CD4-positive, alpha-beta T cell (primary cell): ENCODE measurements at regions of chr2 and their contacts with region 1.

Region 1: GRCh38 chr2:206693399-206694137 is 24.6 kb downstream of the DYTN start:
- DNase-seq: peak in 9 of 14 experiments; percentile 1 to 77 (median 10)
- ATAC-seq: peak; percentile 34
- H3K4me3 ChIP-seq: no peak overlapping the region
- H3K4me3 Mint-ChIP-seq: no peak overlapping the region
- H3K27ac ChIP-seq: no peak overlapping the region
- H3K27ac Mint-ChIP-seq: no peak overlapping the region
- H3K4me1 ChIP-seq: no peaks in the 10 kb centered on the region
- H3K4me1 Mint-ChIP-seq: peaks cover 4% of the 10 kb centered on the region
- H3K27me3 ChIP-seq: no peaks in the 10 kb centered on the region
- H3K27me3 Mint-ChIP-seq: no peaks in the 10 kb centered on the region
- CTCF ChIP-seq: peak; percentile 77

Region 2: DNA sequence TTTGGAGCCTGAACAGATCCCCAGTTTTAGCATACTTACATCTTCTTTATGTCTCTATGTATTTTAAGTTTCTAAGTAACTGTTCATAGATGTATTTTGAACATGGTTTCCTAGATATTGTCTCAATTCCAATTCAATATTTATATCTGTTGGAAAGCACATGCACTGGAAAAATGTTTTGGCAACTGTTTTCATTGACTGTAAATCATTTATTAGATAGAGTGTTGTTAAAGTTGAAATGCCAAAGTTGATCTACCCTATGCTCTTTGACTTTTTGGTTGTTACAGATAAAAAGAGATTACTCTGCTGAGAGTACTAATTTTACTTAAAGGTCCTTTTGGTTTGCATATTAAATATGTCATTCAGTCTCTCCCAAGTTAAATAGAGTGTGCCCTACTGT is 1356.3 kb before region 1 on chr2:
- CTCF ChIA-PET with region 1: no interaction called
- POLR2A ChIA-PET with region 1: no interaction called
- intact Hi-C with region 1: no loop called
- DNase-seq: no peak
- ATAC-seq: no peak
- H3K4me3 ChIP-seq: no peak overlapping the region
- H3K4me3 Mint-ChIP-seq: no peak overlapping the region
- H3K27ac ChIP-seq: no peak overlapping the region
- H3K27ac Mint-ChIP-seq: no peak overlapping the region
- H3K4me1 ChIP-seq: no peaks in the 10 kb centered on the region
- H3K4me1 Mint-ChIP-seq: no peaks in the 10 kb centered on the region
- H3K27me3 ChIP-seq: no peaks in the 10 kb centered on the region
- H3K27me3 Mint-ChIP-seq: no peaks in the 10 kb centered on the region
- CTCF ChIP-seq: no peak

Region 3: DNA sequence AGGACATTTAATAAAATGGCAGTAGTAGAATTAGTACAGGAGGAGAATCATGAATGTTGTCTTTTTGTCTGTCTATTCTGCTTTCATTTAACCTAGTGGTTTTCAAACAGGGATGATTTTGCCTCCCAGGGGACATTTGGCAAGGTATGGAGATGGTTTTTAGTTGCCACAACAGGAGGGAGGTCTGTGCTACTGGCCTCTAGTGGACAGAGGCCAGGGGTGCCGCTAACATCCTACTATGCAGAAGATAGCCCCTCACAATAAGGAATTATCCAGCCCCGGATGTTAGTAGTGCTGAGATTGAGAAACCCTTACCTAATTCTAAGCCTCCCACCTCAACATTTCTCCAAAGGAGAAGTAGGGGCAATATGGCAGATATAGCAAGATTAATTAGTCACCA is 90.2 kb after region 1 on chr2:
- CTCF ChIA-PET with region 1: no interaction called
- POLR2A ChIA-PET with region 1: no interaction called
- intact Hi-C with region 1: loop called (anchors 1 to 2 kb)
- DNase-seq: no peak
- ATAC-seq: no peak
- H3K4me3 ChIP-seq: no peak overlapping the region
- H3K4me3 Mint-ChIP-seq: no peak overlapping the region
- H3K27ac ChIP-seq: no peak overlapping the region
- H3K27ac Mint-ChIP-seq: no peak overlapping the region
- H3K4me1 ChIP-seq: no peaks in the 10 kb centered on the region
- H3K4me1 Mint-ChIP-seq: peaks cover 25% of the 10 kb centered on the region
- H3K27me3 ChIP-seq: no peaks in the 10 kb centered on the region
- H3K27me3 Mint-ChIP-seq: no peaks in the 10 kb centered on the region
- CTCF ChIP-seq: peak; percentile 23

Region 4: GRCh38 chr2:206800506-206801417 is 107.2 kb after region 1 on chr2:
- CTCF ChIA-PET with region 1: no interaction called
- POLR2A ChIA-PET with region 1: no interaction called
- intact Hi-C with region 1: no loop called
- DNase-seq: peak; percentile 13 to 75 (median 32)
- ATAC-seq: peak; percentile 66
- H3K4me3 ChIP-seq: peak overlapping the region; percentile 11
- H3K4me3 Mint-ChIP-seq: peak overlapping the region; percentile 66
- H3K27ac ChIP-seq: no peak overlapping the region
- H3K27ac Mint-ChIP-seq: peak overlapping the region; percentile 32
- H3K4me1 ChIP-seq: peaks cover 6% of the 10 kb centered on the region
- H3K4me1 Mint-ChIP-seq: peaks cover 18% of the 10 kb centered on the region
- H3K27me3 ChIP-seq: no peaks in the 10 kb centered on the region
- H3K27me3 Mint-ChIP-seq: no peaks in the 10 kb centered on the region
- CTCF ChIP-seq: peak; percentile 67

Region 5: DNA sequence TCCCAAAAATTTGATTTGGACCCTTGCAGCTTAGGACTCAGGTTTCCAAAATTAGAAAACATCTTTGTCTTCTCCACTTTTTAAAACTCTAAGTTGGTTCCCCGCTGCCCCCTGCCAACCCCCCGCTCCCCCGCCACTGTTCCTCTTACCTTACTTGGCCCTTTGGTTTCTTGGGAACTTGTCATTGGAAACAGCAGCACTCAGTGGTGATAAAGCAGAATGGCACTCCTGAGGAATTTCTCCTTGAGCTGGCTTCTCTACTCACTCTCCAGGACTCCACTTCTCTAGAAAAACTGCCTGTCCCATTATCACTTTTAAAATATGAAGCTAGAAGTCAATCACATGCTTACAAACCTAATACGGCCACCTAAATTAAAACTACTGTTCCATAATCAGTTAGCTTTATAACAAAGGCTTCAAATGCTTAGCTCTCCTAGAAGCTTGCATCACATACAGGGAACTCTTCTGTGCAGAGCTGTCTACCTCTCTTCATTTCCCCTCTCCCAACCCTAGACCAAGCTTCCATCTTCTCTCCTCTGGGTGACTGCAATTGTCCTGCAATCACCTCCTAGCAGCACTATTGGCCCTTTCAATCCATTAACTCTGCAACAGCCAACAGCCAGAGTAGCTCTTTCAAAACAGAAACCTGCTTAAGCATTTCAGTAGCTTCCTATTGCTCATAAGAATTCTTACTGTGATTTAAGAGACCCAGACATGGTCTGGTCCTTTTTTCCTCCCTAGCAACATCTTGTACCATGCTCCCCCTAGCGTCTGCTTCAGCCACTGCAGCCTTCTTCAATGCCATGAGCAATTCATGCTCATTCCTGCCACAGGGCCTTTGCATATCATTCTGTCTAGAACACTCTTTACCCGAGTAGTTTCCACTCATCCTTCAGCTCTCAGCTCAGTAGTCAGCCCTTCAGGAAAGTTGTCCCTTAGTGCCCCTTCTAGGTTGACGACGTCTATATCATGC is 1346.9 kb after region 1 on chr2:
- CTCF ChIA-PET with region 1: interaction called, 3 read pairs
- POLR2A ChIA-PET with region 1: no interaction called
- intact Hi-C with region 1: loop called in 1 of 2 experiments (anchors 5 kb)
- DNase-seq: peak; percentile 41 to 76 (median 54)
- ATAC-seq: peak; percentile 74
- H3K4me3 ChIP-seq: no peak overlapping the region
- H3K4me3 Mint-ChIP-seq: no peak overlapping the region
- H3K27ac ChIP-seq: no peak overlapping the region
- H3K27ac Mint-ChIP-seq: no peak overlapping the region
- H3K4me1 ChIP-seq: no peaks in the 10 kb centered on the region
- H3K4me1 Mint-ChIP-seq: no peaks in the 10 kb centered on the region
- H3K27me3 ChIP-seq: no peaks in the 10 kb centered on the region
- H3K27me3 Mint-ChIP-seq: no peaks in the 10 kb centered on the region
- CTCF ChIP-seq: peak; percentile 62

Region 6: GRCh38 chr2:208072250-208072892 is 1378.8 kb after region 1 on chr2:
- CTCF ChIA-PET with region 1: no interaction called
- POLR2A ChIA-PET with region 1: no interaction called
- intact Hi-C with region 1: loop called (anchors 1 to 2 kb)
- DNase-seq: peak; percentile 21 to 73 (median 42)
- ATAC-seq: peak; percentile 70
- H3K4me3 ChIP-seq: no peak overlapping the region
- H3K4me3 Mint-ChIP-seq: no peak overlapping the region
- H3K27ac ChIP-seq: no peak overlapping the region
- H3K27ac Mint-ChIP-seq: no peak overlapping the region
- H3K4me1 ChIP-seq: no peaks in the 10 kb centered on the region
- H3K4me1 Mint-ChIP-seq: no peaks in the 10 kb centered on the region
- H3K27me3 ChIP-seq: no peaks in the 10 kb centered on the region
- H3K27me3 Mint-ChIP-seq: peaks cover 16% of the 10 kb centered on the region
- CTCF ChIP-seq: peak; percentile 76